CD4-positive, alpha-beta T cell (primary cell): ENCODE measurements at regions of chr15 and their contacts with region 1.

Region 1: GRCh38 chr15:44663409-44664308 is at the start of gene SPG11:
- DNase-seq: peak; percentile 93 to 99 (median 96)
- ATAC-seq: peak; percentile 78
- H3K4me3 ChIP-seq: peak within 1 kb of the TSS; percentile 90
- H3K4me3 Mint-ChIP-seq: peak within 1 kb of the TSS; percentile 100
- H3K27ac ChIP-seq: peak within 1 kb of the TSS; percentile 97
- H3K27ac Mint-ChIP-seq: peak within 1 kb of the TSS; percentile 96
- H3K4me1 ChIP-seq: peaks cover 62% of the 10 kb centered on the region
- H3K4me1 Mint-ChIP-seq: peaks cover 76% of the 10 kb centered on the region
- H3K27me3 ChIP-seq: no peaks in the 10 kb centered on the region
- H3K27me3 Mint-ChIP-seq: no peaks in the 10 kb centered on the region
- CTCF ChIP-seq: peak; percentile 87
- total RNA-seq, gene SPG11: 49.9 to 51.3 TPM

Region 2: DNA sequence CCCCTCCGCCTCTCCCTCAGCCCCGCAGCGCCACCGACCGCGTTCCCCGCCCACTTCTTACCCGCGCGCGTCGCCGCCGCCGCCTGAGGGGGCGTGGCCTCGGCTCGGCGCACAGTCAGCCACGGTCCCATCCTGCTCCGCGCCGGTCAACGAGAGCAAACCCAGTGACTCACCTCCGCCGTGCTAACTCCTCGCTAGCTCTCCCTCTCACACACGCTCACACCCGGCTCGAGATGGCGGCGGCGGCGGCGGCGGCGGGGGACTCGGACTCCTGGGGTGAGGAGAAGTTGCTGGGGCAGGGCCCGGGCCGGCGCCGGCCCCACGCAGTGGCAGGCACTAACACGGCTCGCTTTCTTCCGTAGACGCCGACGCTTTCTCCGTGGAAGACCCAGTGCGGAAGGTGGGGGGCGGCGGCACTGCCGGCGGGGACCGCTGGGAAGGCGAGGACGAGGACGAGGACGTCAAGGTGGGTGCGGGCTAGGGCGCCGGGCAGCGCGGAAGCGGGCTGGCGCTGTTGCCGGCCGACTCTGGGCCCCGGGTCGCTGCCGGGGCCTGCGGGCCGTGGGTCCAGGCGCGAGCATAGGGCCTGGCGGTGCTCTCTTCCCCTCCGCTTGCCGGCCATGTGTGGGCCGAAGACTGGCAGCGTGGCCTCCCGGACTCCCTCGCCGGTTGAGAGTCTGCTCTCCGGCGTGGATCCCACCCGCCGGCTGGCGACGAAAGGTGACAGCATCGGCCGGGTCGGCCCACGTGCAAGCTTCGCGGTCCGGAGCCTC is 126.5 kb before region 1 on chr15 and contains the start of gene EIF3J:
- CTCF ChIA-PET with region 1: no interaction called
- POLR2A ChIA-PET with region 1: interaction called, 10 read pairs
- intact Hi-C with region 1: loop called in 1 of 2 experiments (anchors 5 kb)
- DNase-seq: peak; percentile 86 to 99 (median 94)
- ATAC-seq: peak; percentile 89
- H3K4me3 ChIP-seq: peak within 1 kb of the TSS; percentile 68
- H3K4me3 Mint-ChIP-seq: peak within 1 kb of the TSS; percentile 92
- H3K27ac ChIP-seq: peak within 1 kb of the TSS; percentile 86 to 97
- H3K27ac Mint-ChIP-seq: peak within 1 kb of the TSS; percentile 91
- H3K4me1 ChIP-seq: peaks cover 42% of the 10 kb centered on the region
- H3K4me1 Mint-ChIP-seq: peaks cover 59% of the 10 kb centered on the region
- H3K27me3 ChIP-seq: no peaks in the 10 kb centered on the region
- H3K27me3 Mint-ChIP-seq: no peaks in the 10 kb centered on the region
- CTCF ChIP-seq: no peak
- total RNA-seq, gene EIF3J: 67.6 to 69.2 TPM

Region 3: GRCh38 chr15:44598892-44599291 is 64.8 kb before region 1 on chr15:
- CTCF ChIA-PET with region 1: interaction called, 7 read pairs
- POLR2A ChIA-PET with region 1: interaction called, 17 read pairs
- intact Hi-C with region 1: loop called in 1 of 2 experiments (anchors 10 kb)
- DNase-seq: no peak
- ATAC-seq: no peak
- H3K4me3 ChIP-seq: no peak overlapping the region
- H3K4me3 Mint-ChIP-seq: no peak overlapping the region
- H3K27ac ChIP-seq: peak overlapping the region; percentile 21 to 23
- H3K27ac Mint-ChIP-seq: peak overlapping the region; percentile 80
- H3K4me1 ChIP-seq: peaks cover 14% of the 10 kb centered on the region
- H3K4me1 Mint-ChIP-seq: peaks cover 14% of the 10 kb centered on the region
- H3K27me3 ChIP-seq: no peaks in the 10 kb centered on the region
- H3K27me3 Mint-ChIP-seq: no peaks in the 10 kb centered on the region
- CTCF ChIP-seq: no peak

Region 4: DNA sequence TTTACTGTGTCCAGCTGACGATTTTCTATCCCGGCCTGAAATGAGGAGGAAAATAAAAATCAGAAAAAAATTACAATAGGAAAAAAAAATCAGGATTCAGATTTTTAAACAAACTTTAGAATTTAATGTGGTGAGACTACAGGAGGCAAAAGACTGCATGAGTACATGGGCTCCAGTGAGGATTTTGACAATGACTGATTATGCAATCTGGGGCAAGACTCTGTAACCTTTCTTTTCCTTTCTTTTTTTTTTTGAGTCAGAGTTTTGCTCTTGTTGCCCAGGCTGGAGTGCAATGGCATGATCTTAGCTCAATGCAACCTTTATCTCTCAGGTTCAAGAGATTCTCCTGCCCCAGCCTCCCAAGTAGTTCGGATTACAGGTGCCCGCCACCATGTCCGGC is 30.1 kb before region 1 on chr15:
- CTCF ChIA-PET with region 1: interaction called, 3 read pairs
- POLR2A ChIA-PET with region 1: interaction called, 10 read pairs
- intact Hi-C with region 1: no loop called
- DNase-seq: no peak
- ATAC-seq: no peak
- H3K4me3 ChIP-seq: no peak overlapping the region
- H3K4me3 Mint-ChIP-seq: no peak overlapping the region
- H3K27ac ChIP-seq: no peak overlapping the region
- H3K27ac Mint-ChIP-seq: no peak overlapping the region
- H3K4me1 ChIP-seq: no peaks in the 10 kb centered on the region
- H3K4me1 Mint-ChIP-seq: peaks cover 14% of the 10 kb centered on the region
- H3K27me3 ChIP-seq: no peaks in the 10 kb centered on the region
- H3K27me3 Mint-ChIP-seq: no peaks in the 10 kb centered on the region
- CTCF ChIP-seq: no peak

Region 5: DNA sequence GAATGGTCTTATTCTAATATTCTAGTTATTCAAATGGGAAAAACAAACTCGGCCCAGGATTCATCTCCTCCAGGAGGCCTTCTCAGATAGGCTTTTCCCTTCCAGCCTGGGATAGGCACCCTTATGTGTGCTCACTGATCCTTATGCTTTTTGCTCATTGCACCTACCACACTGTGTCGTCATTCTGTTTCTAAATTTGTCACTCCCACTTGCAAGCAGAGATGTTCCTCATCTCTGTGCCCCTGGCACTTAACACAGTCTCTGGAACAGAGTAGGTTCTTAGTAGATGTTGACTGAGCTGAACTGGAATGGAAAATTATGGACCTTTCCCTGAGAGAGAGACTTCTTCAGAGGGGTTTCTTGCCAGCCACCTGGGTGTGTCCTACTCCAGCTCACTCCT is 18.6 kb after region 1 on chr15:
- CTCF ChIA-PET with region 1: interaction called, 37 read pairs
- POLR2A ChIA-PET with region 1: interaction called, 632 read pairs
- intact Hi-C with region 1: loop called (anchors 1 to 2 kb)
- DNase-seq: no peak
- ATAC-seq: no peak
- H3K4me3 ChIP-seq: no peak overlapping the region
- H3K4me3 Mint-ChIP-seq: peak overlapping the region; percentile 77
- H3K27ac ChIP-seq: peak overlapping the region; percentile 38 to 68
- H3K27ac Mint-ChIP-seq: peak overlapping the region; percentile 89
- H3K4me1 ChIP-seq: peaks cover 68% of the 10 kb centered on the region
- H3K4me1 Mint-ChIP-seq: peaks cover 93% of the 10 kb centered on the region
- H3K27me3 ChIP-seq: no peaks in the 10 kb centered on the region
- H3K27me3 Mint-ChIP-seq: no peaks in the 10 kb centered on the region
- CTCF ChIP-seq: no peak

Region 6: GRCh38 chr15:44711356-44712107 is 47.9 kb after region 1 on chr15 and contains the start of gene B2M:
- CTCF ChIA-PET with region 1: interaction called, 115 read pairs
- POLR2A ChIA-PET with region 1: interaction called, 4,232 read pairs
- intact Hi-C with region 1: loop called (anchors 1 kb)
- DNase-seq: peak; percentile 92 to 98 (median 96)
- ATAC-seq: peak; percentile 82
- H3K4me3 ChIP-seq: peak within 1 kb of the TSS; percentile 83
- H3K4me3 Mint-ChIP-seq: peak within 1 kb of the TSS; percentile 96
- H3K27ac ChIP-seq: peak within 1 kb of the TSS; percentile 99 to 100
- H3K27ac Mint-ChIP-seq: peak within 1 kb of the TSS; percentile 100
- H3K4me1 ChIP-seq: peaks cover 38% of the 10 kb centered on the region
- H3K4me1 Mint-ChIP-seq: peaks cover 70% of the 10 kb centered on the region
- H3K27me3 ChIP-seq: no peaks in the 10 kb centered on the region
- H3K27me3 Mint-ChIP-seq: no peaks in the 10 kb centered on the region
- CTCF ChIP-seq: no peak
- total RNA-seq, gene B2M: 4,357 to 4,503 TPM

Region 7: GRCh38 chr15:44728576-44729407 is 65.1 kb after region 1 on chr15:
- CTCF ChIA-PET with region 1: interaction called, 58 read pairs
- POLR2A ChIA-PET with region 1: interaction called, 4,232 read pairs
- intact Hi-C with region 1: loop called in 1 of 2 experiments (anchors 1 kb)
- DNase-seq: peak; percentile 87 to 99 (median 93)
- ATAC-seq: peak; percentile 77
- H3K4me3 ChIP-seq: peak overlapping the region; percentile 79
- H3K4me3 Mint-ChIP-seq: peak overlapping the region; percentile 96
- H3K27ac ChIP-seq: peak overlapping the region; percentile 97 to 98
- H3K27ac Mint-ChIP-seq: peak overlapping the region; percentile 99
- H3K4me1 ChIP-seq: peaks cover 74% of the 10 kb centered on the region
- H3K4me1 Mint-ChIP-seq: peaks cover 90% of the 10 kb centered on the region
- H3K27me3 ChIP-seq: no peaks in the 10 kb centered on the region
- H3K27me3 Mint-ChIP-seq: no peaks in the 10 kb centered on the region
- CTCF ChIP-seq: no peak